ENCODE measurements at regions of chr12 and their contacts with region 1.

Region 1: GRCh38 chr12:41724216-41724615 is 420.5 kb downstream of the GXYLT1 start:
- DNase-seq: no peak
- ATAC-seq: no peak
- H3K4me3 ChIP-seq: no peak overlapping the region
- H3K27ac ChIP-seq: no peak overlapping the region
- H3K4me1 ChIP-seq: no peaks in the 10 kb centered on the region
- H3K27me3 ChIP-seq: no peaks in the 10 kb centered on the region
- CTCF ChIP-seq: no peak

Region 2: DNA sequence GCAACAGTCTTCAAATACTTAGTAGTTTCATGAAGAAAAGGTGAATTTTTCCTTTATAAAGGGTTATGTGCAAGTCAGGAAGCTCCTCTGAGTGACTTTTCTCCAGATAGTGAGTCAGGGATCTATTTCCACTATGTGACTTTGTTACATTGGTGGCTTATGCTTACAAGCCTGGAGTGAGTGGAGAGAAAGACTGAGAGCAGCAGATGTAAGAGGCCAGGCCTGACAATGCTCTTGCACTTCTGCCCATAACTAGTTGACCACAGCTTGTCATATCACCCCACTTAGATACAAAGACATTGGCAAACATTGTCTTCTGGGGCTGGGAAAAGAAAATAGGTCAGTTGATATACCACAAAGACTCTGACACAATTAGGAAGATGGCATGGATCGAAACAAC is 299.6 kb before region 1 on chr12:
- intact Hi-C with region 1: no loop called
- DNase-seq: no peak
- ATAC-seq: no peak
- H3K4me3 ChIP-seq: no peak overlapping the region
- H3K27ac ChIP-seq: no peak overlapping the region
- H3K4me1 ChIP-seq: no peaks in the 10 kb centered on the region
- H3K27me3 ChIP-seq: no peaks in the 10 kb centered on the region
- CTCF ChIP-seq: no peak

Region 3: DNA sequence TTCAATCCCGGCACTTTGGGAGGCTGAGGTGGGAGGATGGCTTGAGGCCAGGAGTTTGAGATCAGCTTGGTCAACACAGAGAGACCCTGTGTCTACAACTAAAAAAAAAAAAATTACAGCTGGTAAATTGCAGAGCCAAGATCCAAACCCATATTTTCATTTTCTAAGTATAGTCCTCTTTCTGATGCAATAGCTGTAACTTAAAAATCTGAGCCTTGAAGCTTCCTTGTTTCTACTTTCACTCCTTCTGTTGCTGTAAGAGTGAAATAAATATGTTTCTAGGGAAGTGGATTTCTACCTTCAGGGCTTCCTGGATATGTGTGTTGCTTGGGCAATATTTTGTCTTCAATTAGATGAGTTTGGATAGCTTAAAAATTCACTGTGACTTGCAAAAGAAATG is 907.3 kb after region 1 on chr12:
- intact Hi-C with region 1: loop called in 1 of 10 experiments (anchors 10 kb)
- DNase-seq: no peak
- ATAC-seq: no peak
- H3K4me3 ChIP-seq: no peak overlapping the region
- H3K27ac ChIP-seq: no peak overlapping the region
- H3K4me1 ChIP-seq: peaks cover 0 to 11% (median 0%) of the 10 kb centered on the region in 9 donors
- H3K27me3 ChIP-seq: no peaks in the 10 kb centered on the region
- CTCF ChIP-seq: no peak

Measured in heart right ventricle (tissue), 16 donors.